GM10248 (cell line): ENCODE measurements at regions of chr7 and their contacts with region 1.

Region 1: DNA sequence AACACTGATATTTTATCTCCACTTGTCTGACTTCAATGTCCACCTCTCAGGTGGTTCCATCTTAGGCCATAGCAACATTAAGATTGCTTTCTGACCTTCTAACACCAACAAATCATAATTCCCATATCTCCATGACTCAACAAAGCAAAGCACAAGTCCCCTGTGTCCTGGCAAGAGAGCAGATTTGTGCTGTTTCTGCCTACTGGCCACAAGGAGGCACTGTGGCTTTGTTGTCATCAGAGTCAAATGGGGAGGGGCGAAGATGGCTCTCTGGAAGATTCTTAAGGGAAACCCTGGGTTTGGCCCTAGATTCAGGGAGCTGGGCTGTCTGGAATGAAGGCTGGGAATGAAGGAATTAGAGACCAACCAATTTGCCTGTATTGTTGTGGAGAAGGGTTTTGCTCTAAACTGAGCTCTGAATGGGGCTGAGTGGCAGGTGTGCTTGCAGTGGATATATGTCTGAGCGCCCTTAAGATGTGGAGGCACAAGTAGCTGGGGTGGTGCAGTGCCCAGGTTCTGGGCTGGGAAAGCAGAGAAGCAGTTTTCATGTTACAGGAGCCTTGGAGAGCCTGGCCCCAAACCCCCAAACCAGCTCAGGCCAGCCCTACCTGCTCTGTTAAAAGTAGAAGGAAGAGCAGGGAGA is 154.8 kb upstream of the PRSS58 start:
- DNase-seq: peak; percentile 58
- CTCF ChIP-seq: peak; percentile 68

Region 2: DNA sequence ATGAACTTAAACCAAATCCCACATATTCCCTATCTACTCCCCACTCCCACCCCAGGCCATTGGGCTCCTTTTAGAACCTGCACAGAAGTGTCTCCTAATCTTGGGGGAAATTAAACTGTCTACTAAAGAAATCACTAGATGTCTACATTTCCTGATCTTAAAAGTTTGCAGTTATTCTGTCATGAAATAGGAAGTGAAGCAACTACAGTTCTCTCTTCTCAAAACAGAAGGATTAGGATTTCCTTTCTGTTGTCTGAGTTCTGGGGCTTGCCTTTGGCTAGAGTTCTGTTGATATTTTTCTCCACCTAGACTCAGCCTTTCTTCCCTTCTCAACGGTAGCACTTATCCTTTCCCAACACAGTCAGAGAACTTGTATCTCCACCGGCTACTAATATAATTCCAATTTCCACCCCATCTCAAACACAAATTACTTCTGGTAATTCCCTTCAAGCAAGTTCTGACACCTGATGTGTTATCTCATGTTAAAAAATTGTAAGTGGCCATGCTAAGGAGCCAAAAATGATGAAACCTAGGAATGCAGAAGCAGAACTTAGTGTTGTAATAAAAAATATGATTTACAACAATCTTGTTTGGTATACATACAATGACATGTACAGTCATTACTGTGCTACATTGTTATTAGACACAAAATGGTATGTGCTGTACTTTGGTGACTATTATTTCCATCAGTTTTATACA is 484.4 kb before region 1 on chr7:
- CTCF ChIA-PET with region 1: no interaction called
- POLR2A ChIA-PET with region 1: no interaction called
- DNase-seq: no peak
- CTCF ChIP-seq: no peak

Region 3: GRCh38 chr7:142196066-142196840 is 216.4 kb before region 1 on chr7:
- CTCF ChIA-PET with region 1: no interaction called
- POLR2A ChIA-PET with region 1: no interaction called
- DNase-seq: no peak
- CTCF ChIP-seq: no peak

Region 4: GRCh38 chr7:142425281-142425680 is 12.6 kb after region 1 on chr7:
- CTCF ChIA-PET with region 1: interaction called, 10 read pairs
- POLR2A ChIA-PET with region 1: no interaction called
- DNase-seq: no peak
- CTCF ChIP-seq: no peak

Region 5: DNA sequence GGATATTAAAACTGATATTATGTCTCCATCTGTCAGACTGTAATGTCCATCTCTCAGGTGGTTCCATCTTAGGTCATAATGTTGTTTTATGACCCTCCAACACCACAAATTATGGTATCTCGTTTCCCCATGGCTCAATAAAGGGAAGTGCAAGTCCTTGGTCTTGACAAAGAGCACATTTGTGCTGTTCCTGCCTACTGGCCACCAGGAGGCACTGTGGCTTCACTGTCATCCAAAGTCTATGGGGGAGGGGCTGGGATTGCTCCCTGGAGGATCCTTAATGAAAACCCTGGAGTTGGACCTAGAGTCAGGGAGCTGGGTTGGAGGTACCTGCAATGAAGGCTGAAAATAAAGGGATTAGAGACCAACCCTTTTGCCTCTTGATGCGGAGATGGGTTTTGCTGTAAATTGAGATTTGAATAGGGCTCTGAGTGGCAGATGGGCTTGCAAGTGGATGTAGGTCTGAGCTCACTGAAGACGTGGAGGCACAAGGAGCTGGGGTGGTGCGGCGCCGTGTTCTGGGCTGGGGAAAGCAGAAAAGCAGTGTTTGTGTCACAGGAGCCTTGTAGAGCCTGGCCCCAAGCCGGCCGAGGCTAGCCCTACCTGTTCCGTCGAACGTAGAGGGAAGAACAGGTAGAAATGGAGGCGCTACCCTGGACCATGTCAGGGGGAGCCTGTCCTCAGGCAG is 25.7 kb after region 1 on chr7:
- CTCF ChIA-PET with region 1: interaction called, 10 read pairs
- POLR2A ChIA-PET with region 1: no interaction called
- DNase-seq: peak; percentile 43
- CTCF ChIP-seq: peak; percentile 58